Activated T-helper 1 cell treated with anti-CD3 and anti-CD28 coated beads, Interleukin-12 subunit alpha, Interleukin-12 subunit beta, Interleukin-2, Interleukin-4 antibody, amounts not matched to agents 30 ng/mL and 10 ng/mL and 1 ng/mL, durations not matched to agents 14 hours and 24 hours and 36 hours (primary cell): ENCODE measurements at regions of chr12 and their contacts with region 1.

Region 1: GRCh38 chr12:44930972-44931600 is 55.0 kb upstream of the NELL2 start:
- DNase-seq: no peak
- H3K4me3 Mint-ChIP-seq: no peak overlapping the region
- H3K27ac Mint-ChIP-seq: peak overlapping the region; percentile 18
- H3K4me1 Mint-ChIP-seq: no peaks in the 10 kb centered on the region
- H3K27me3 Mint-ChIP-seq: peaks cover 3% of the 10 kb centered on the region

Region 2: GRCh38 chr12:44015335-44015941 is 915.6 kb before region 1 on chr12:
- intact Hi-C with region 1: loop called (anchors 1 kb)
- DNase-seq: no peak
- H3K4me3 Mint-ChIP-seq: no peak overlapping the region
- H3K27ac Mint-ChIP-seq: no peak overlapping the region
- H3K4me1 Mint-ChIP-seq: no peaks in the 10 kb centered on the region
- H3K27me3 Mint-ChIP-seq: peaks cover 3% of the 10 kb centered on the region

Region 3: DNA sequence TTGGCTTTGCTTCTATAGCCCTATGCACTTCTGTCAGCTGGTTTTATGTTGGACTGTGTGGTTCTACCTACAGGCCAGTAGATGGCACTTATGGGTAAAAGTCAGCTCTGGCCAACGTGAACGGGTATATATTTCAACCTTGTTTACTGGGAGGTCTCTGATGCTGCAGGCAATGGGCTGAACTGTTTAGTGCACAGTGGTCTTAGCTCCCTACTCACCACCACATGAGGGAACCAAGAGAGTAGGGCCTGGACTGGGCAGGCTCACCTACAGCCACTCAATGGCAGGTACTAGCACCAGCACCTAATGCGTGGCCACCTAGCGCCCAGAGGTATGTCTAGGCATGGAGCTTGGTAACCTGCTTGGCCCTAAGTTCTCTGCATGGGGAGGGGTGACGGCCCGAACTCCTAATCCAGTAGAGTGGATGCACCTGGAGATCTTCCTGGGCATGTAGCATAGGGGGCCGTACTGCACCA is 613.4 kb before region 1 on chr12:
- intact Hi-C with region 1: loop called (anchors 1 kb)
- DNase-seq: no peak
- H3K4me3 Mint-ChIP-seq: no peak overlapping the region
- H3K27ac Mint-ChIP-seq: no peak overlapping the region
- H3K4me1 Mint-ChIP-seq: no peaks in the 10 kb centered on the region
- H3K27me3 Mint-ChIP-seq: no peaks in the 10 kb centered on the region

Region 4: DNA sequence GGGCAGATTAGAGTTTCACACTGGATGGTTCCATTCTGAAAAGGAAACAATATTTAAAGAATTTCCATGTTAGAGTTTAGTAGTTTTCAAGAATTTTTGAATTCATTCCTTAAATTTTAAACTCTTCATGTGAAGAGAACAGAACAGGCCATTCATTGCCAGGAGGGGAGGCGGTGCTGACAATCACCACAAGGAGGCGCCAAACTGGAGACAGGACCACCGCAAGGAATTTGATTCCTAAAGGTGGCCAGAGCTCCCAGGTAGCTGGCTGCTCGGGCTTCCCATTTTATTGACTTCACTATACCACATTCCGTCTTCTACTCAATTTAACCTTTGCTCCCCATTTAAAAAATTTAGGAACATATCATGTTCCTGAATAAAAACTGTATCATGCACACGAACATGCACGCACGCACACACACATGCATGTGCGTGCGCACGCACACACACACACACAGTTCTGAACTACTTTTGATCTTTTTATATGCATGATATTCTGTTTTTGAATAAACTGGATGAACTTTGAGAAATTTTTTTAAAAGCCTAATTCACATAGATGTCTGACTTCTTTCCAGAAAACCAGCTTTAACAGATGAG is 156.2 kb before region 1 on chr12:
- intact Hi-C with region 1: loop called (anchors 1 kb)
- DNase-seq: peak; percentile 18
- H3K4me3 Mint-ChIP-seq: no peak overlapping the region
- H3K27ac Mint-ChIP-seq: no peak overlapping the region
- H3K4me1 Mint-ChIP-seq: no peaks in the 10 kb centered on the region
- H3K27me3 Mint-ChIP-seq: no peaks in the 10 kb centered on the region

Region 5: DNA sequence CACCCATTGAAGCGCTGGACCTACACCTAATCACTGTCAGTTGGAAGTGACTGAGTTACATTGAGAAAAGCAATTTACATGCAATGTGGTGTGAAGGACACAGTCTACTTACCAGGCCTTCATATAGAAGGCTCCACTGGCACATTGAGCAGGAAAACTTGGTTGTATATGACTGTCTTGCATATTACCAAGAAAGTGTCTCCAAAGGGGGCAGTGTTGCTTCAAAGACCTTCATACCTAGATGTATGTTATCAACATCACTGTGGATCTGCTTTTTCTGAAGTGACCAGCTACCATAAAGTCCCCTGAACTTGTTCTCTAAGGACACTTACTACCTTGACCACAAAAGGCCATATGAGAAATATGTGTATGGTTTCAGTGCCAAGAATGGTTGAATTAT is 119.0 kb before region 1 on chr12:
- intact Hi-C with region 1: loop called (anchors 1 kb)
- DNase-seq: peak; percentile 36
- H3K4me3 Mint-ChIP-seq: no peak overlapping the region
- H3K27ac Mint-ChIP-seq: no peak overlapping the region
- H3K4me1 Mint-ChIP-seq: peaks cover 20% of the 10 kb centered on the region
- H3K27me3 Mint-ChIP-seq: no peaks in the 10 kb centered on the region

Region 6: DNA sequence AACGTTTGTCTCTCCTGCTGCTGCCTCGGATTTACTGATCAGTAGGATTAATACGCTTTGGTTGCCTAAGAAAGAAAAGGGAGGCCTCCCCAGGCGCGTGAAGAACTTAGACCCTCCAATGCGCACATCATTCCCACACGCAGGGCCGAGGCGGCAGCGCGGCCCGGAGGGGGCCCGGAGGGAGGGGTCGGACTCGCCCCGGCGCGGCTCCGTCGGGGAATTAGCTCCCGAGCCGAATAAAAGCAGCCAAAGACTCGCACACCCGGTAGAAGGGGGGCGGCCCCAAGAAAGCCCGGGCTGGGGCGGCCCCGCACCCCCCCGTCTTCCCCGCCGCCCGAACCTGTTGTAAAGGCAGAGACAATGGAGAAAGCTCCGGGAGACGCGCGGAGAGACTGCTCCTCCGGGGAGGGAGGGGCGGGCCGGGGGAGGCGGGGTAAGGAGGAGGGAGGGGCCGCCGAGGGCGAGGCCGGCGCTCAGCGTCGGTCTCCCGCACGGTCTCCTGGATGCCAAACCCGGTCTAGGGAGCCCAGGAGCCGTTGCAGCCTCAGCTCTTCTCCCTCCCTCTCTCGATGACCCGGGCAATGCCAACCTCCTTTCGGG is 55.0 kb before region 1 on chr12 and contains the start of gene NELL2:
- intact Hi-C with region 1: loop called (anchors 2 kb)
- DNase-seq: peak; percentile 43
- H3K4me3 Mint-ChIP-seq: peak within 1 kb of the TSS; percentile 96
- H3K27ac Mint-ChIP-seq: peak within 1 kb of the TSS; percentile 78
- H3K4me1 Mint-ChIP-seq: peaks cover 33% of the 10 kb centered on the region
- H3K27me3 Mint-ChIP-seq: peaks cover 23% of the 10 kb centered on the region
- total RNA-seq, gene NELL2: 11.5 and 16.4 TPM in 2 replicates